Sciatic nerve (tissue), 2 donors: ENCODE measurements at regions of chr9 and their contacts with region 1.

Region 1: DNA sequence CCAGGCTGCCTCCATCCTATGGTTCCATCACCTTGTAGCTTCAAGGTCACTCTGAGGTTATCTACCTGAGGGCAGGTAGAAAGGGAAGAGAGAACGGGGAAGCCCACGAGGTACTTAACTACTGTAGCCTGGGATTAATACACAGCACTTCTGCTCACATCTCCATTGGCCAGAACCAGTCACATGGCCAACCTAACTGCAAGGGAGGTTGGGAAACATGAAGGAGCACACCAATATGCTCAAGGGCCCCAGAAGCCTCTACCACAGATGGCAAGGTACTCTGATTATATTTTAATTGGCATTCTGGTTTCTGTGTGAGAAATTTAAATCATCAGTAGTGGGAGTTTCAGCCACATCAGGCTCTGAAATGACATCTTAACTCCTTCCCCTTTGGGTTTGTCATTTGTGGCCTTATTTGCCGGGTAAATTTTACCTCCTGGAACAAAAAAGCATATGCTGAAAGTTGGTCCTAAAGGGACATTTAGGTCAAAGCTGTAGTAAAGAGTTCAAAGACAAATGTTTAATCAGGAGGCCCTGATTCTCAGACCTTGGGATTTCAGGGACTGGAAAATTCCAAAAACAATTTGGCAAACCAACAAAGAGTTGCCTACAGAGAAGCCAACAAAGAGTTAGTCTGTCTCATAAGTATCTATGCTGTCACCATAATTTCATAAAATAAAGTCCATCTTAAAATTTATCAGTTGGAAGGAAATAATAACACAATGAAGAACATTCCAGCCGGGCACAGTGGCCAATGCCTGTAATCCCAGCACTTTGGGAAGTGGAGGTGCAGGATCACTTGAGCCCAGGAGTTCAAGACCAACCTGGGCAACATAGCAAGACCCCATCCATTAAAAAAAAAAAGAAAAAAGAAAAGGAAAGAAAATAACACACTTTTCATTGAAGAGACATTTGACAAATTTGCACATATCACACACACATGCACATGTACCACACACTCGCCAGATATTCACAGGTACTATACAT is 13.8 kb upstream of the MVB12B start:
- DNase-seq: no peak
- ATAC-seq: no peak

Region 2: DNA sequence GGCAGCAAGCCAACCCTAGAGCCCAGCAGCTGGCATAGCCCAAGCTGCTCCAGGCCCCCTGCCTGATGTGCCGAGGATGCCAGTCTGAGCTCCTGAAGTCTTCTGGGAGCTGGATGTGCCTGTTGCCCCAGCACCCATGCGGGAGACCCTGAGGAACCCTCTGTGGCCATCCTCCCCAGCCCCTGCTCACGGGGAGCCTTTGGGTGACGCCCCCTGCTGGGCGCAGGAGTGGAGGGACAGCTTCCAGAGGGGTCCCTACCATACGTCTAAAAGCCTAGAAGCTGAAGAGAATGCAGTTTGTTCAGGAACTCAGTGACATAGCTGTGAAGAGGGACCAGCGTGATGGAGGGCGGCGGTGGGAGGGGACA is 19.4 kb before region 1 on chr9:
- intact Hi-C with region 1: loop called (anchors 1 kb)
- DNase-seq: no peak
- ATAC-seq: no peak

Region 3: GRCh38 chr9:126326228-126327005 is 13.6 kb after region 1 on chr9 and contains the start of gene MVB12B:
- intact Hi-C with region 1: no loop called
- DNase-seq: no peak
- ATAC-seq: peak; percentile 33
- total RNA-seq, gene MVB12B: 65.7 TPM

Region 4: GRCh38 chr9:126363847-126364671 is 51.2 kb after region 1 on chr9:
- intact Hi-C with region 1: no loop called
- DNase-seq: no peak
- ATAC-seq: peak; percentile 34